GM23248 (cell line): ENCODE measurements at regions of chr19 and their contacts with region 1.

Region 1: DNA sequence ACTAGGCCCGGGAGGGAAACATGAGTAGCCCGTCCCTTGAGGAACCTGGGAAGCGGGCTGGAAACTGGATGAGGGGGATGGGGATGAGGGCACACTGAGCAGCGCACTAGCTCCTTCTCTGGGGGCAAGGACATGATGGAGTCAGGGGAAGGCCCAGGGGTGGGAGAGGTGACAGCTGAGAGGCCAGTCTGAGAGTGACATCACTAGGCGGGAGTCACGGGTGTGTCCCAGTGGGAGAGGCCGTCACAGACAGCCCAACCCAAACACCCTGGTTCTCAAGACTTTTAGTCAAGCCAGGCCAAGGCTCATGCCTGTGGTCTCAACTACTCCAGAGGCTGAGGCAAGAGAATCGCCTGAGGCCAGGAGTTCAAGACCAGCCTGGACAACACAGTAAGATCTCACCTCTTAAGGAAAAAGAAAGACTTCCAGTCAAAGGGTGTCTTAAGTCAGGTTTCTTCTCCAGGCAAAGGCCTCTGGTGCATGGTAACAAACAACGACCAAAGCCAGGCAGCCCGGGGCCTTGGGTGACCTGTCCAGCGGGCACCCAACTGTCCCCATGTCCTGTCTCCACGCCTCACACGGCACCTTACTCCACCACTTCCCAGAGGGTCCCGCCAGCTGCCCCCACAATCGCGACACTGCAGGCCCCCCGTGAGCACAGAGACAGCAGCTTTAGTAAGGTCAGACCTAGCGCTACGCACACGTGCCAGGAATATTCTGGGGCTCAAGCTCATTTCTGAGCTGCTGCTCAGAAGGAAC is 25.5 kb upstream of the TIMM44 start:
- DNase-seq: peak; percentile 47
- H3K4me3 ChIP-seq: no peak overlapping the region
- H3K27ac ChIP-seq: no peak overlapping the region
- H3K4me1 ChIP-seq: no peaks in the 10 kb centered on the region
- H3K27me3 ChIP-seq: no peaks in the 10 kb centered on the region

Region 2: GRCh38 chr19:7535035-7535992 is 433.7 kb before region 1 on chr19 and contains the start of gene PNPLA6:
- in situ Hi-C with region 1: no loop called
- DNase-seq: peak; percentile 97
- H3K4me3 ChIP-seq: peak within 1 kb of the TSS; percentile 94
- H3K27ac ChIP-seq: peak within 1 kb of the TSS; percentile 62
- H3K4me1 ChIP-seq: no peaks in the 10 kb centered on the region
- H3K27me3 ChIP-seq: no peaks in the 10 kb centered on the region
- total RNA-seq, gene PNPLA6: 86.6 and 116 TPM in 2 replicates

Region 3: GRCh38 chr19:8129060-8129459 is 160.1 kb after region 1 on chr19:
- in situ Hi-C with region 1: no loop called
- DNase-seq: no peak
- H3K4me3 ChIP-seq: no peak overlapping the region
- H3K27ac ChIP-seq: no peak overlapping the region
- H3K4me1 ChIP-seq: no peaks in the 10 kb centered on the region
- H3K27me3 ChIP-seq: 0 out of 2 replicates have a peak, but pooled peaks cover 3% of the 10 kb centered on the region

Region 4: DNA sequence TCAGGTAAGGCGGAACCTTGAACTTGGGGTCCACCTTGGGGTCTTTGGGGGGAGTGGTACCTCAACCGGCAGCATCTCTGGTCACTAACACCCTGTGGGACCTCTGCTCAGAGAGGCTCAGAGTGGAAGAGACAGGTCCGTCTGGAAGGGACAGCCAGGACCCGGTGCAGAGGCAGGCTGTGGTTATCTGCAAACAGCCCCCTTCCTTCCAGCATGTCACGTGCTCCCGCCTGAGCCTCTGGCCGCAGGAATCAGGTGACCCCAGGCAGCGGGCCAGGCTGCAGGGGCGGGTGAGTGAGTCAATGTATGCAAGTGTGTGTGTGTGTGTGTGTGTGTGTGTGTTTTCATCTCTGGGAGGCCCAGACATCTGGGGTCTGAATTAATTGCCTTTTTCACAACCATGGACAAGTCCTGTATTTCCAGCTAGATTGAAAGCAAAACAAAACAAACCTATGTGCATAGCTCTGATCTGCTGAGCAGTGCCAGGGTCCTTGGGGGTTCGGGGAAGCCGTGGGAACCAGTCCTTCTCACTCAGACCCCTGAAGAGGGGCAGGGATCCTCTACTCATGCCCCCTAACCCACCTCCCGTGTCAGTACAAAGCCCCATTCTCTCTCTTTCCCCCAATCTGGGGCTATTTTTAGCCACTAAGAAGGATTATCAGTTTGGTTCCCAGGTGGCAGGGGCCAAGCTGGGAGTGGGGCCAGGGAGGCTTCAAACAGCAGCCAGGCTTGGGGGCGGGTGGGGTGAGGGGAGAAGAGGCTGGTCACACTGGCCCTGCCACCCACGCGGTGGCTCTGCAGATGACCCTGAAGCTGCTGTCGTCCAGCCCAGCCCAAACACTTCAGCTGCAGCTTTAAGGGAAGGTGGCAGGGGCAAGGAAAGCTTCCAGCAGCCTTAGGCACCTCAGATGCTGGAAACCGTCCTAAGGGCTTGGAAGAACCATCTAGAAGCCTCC is 271.6 kb after region 1 on chr19:
- in situ Hi-C with region 1: loop called (anchors 10 kb)
- DNase-seq: peak; percentile 82
- H3K4me3 ChIP-seq: no peak overlapping the region
- H3K27ac ChIP-seq: no peak overlapping the region
- H3K4me1 ChIP-seq: peaks cover 6% of the 10 kb centered on the region
- H3K27me3 ChIP-seq: no peaks in the 10 kb centered on the region